ENCODE measurements at regions of chr17 and their contacts with region 1.

Region 1: GRCh38 chr17:39636927-39637736 is at the start of gene STARD3:
- DNase-seq: peak; percentile 96
- H3K4me3 ChIP-seq: peak within 1 kb of the TSS; percentile 88 to 97
- H3K27ac ChIP-seq: peak within 1 kb of the TSS; percentile 59 to 85
- H3K4me1 ChIP-seq: peaks cover 0 to 21% of the 10 kb centered on the region in 2 experiments; a peak in 2 of 4 replicates
- H3K27me3 ChIP-seq: no peaks in the 10 kb centered on the region
- CTCF ChIP-seq: no peak
- EP300 ChIP-seq: no peak
- RAD21 ChIP-seq: no peak
- polyA plus RNA-seq, gene STARD3: 76.8 and 78.0 TPM in 2 replicates

Region 2: GRCh38 chr17:39569126-39569525 is 68.0 kb before region 1 on chr17:
- CTCF ChIA-PET with region 1: no interaction called
- POLR2A ChIA-PET with region 1: no interaction called
- DNase-seq: no peak
- H3K4me3 ChIP-seq: no peak overlapping the region
- H3K27ac ChIP-seq: no peak overlapping the region
- H3K4me1 ChIP-seq: peaks cover 0 to 4% of the 10 kb centered on the region in 2 experiments; a peak in 1 of 4 replicates
- H3K27me3 ChIP-seq: no peaks in the 10 kb centered on the region
- CTCF ChIP-seq: no peak
- EP300 ChIP-seq: no peak
- RAD21 ChIP-seq: no peak

Region 3: GRCh38 chr17:39668199-39668966 is 31.3 kb after region 1 on chr17 and contains the start of gene PNMT:
- CTCF ChIA-PET with region 1: interaction called, 15 read pairs
- POLR2A ChIA-PET with region 1: no interaction called
- DNase-seq: peak; percentile 93
- H3K4me3 ChIP-seq: peak within 1 kb of the TSS; percentile 36 to 49
- H3K27ac ChIP-seq: no peak within 1 kb of the TSS
- H3K4me1 ChIP-seq: peaks cover 0 to 12% of the 10 kb centered on the region in 2 experiments; a peak in 1 of 4 replicates
- H3K27me3 ChIP-seq: no peaks in the 10 kb centered on the region
- CTCF ChIP-seq: peak; percentile 61
- EP300 ChIP-seq: no peak
- RAD21 ChIP-seq: peak; percentile 28; the same call in 1 of the 2 replicates
- polyA plus RNA-seq, gene PNMT: 0.05 and 0.07 TPM in 2 replicates

Region 4: DNA sequence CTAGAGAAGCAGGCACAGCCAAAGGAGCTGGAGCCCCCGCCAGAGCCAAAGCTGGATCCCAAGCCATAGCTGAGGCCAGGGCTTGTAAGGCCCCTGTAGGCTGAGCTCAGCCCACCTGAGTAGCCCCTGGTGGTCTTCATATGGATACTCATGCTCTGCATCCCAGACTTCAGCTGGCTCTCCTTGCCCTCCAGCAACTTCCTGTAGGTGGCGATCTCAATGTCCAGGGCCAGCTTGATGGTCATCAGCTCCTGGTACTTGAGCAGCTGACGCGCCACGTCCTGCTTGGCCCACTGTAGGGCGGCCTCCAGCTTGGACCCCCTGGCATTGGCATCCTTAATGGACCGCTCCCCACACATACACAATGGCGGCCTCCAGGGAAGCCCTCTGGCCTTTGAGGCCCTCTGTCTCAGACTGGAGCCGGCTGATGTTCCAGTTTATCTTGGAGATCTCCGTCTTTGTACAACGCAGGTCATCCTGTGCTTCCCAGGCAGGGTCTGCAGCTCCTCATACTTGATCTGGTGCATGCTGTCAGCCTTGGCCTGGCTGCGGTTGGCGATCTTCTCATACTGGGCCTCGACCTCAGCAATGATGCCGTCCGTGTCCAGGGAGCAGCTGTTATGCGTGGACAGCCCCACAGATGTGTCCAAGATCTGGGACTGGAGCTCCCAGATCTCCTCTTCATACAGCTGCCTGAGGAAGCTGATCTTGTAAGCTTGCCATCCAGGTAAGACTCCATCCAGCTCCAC is 198.1 kb after region 1 on chr17:
- CTCF ChIA-PET with region 1: no interaction called
- POLR2A ChIA-PET with region 1: no interaction called
- DNase-seq: no peak
- H3K4me3 ChIP-seq: no peak overlapping the region
- H3K27ac ChIP-seq: no peak overlapping the region
- H3K4me1 ChIP-seq: no peaks in the 10 kb centered on the region
- H3K27me3 ChIP-seq: peaks cover 8% of the 10 kb centered on the region; the same call in 1 of the 2 replicates
- CTCF ChIP-seq: no peak
- EP300 ChIP-seq: no peak
- RAD21 ChIP-seq: no peak

Measured in SK-N-SH (cell line).